Spleen (tissue), 13 donors: ENCODE measurements at regions of chr1 and their contacts with region 1.

Region 1: DNA sequence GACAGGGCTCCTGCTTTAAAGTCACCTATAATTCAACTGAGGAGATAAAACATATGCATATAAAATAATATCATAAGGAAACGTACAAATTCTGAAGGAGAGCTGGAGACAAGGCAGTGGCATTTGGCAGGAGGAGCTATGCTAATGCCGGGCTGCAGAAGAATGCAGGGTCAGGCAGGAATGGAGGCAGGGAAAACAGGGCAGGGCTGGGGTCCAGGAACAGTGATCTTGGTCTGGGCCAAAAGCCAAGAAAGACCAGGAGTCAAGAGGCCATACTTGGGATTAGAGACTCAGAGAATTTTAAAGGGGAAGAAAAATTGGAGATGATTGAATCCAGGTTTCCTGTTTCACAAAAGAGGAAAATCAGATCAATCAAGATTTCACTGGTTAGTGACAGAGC is 20.0 kb upstream of the BRDT start:
- DNase-seq: peak; percentile 46
- H3K4me3 ChIP-seq: no peak overlapping the region
- H3K27ac ChIP-seq: no peak overlapping the region
- H3K4me1 ChIP-seq: peaks cover 0 to 14% (median 3%) of the 10 kb centered on the region in 6 donors
- H3K27me3 ChIP-seq: no peaks in the 10 kb centered on the region
- CTCF ChIP-seq: no peak
- POLR2A ChIP-seq: no peak

Region 2: DNA sequence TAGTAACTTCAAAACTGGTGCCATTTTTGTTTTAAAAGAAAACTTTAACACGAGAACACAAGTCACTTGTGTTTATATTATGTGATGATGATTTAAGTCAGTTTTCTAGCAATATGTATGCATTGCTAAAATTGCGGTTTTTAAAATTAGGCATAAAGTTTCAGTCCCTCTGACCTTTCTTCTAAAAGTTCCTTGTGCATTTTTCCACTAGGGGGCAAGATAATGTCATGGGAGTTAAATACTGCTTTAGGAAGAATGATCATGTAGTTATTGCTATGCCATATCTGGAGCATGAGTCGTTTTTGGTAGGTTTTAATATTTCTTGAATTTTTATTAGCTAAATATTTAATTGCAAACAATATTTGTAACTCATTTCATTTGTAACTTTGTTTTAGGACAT is 417.9 kb before region 1 on chr1:
- intact Hi-C with region 1: loop called (anchors 5 kb)
- DNase-seq: no peak
- H3K4me3 ChIP-seq: peak overlapping the region in 1 of 8 donors; percentile 10
- H3K27ac ChIP-seq: peak overlapping the region in 1 of 8 donors; percentile 11
- H3K4me1 ChIP-seq: peaks cover 0 to 64% (median 15%) of the 10 kb centered on the region in 6 donors
- H3K27me3 ChIP-seq: no peaks in the 10 kb centered on the region
- CTCF ChIP-seq: peak; percentile 30 to 72 (median 63)
- POLR2A ChIP-seq: no peak

Region 3: GRCh38 chr1:91981996-91982609 is 52.9 kb after region 1 on chr1:
- intact Hi-C with region 1: no loop called
- DNase-seq: no peak
- H3K4me3 ChIP-seq: no peak overlapping the region
- H3K27ac ChIP-seq: no peak overlapping the region
- H3K4me1 ChIP-seq: no peaks in the 10 kb centered on the region
- H3K27me3 ChIP-seq: no peaks in the 10 kb centered on the region
- CTCF ChIP-seq: no peak
- POLR2A ChIP-seq: no peak